Mammary epithelial cell (primary cell): ENCODE measurements at regions of chr2 and their contacts with region 1.

Region 1: DNA sequence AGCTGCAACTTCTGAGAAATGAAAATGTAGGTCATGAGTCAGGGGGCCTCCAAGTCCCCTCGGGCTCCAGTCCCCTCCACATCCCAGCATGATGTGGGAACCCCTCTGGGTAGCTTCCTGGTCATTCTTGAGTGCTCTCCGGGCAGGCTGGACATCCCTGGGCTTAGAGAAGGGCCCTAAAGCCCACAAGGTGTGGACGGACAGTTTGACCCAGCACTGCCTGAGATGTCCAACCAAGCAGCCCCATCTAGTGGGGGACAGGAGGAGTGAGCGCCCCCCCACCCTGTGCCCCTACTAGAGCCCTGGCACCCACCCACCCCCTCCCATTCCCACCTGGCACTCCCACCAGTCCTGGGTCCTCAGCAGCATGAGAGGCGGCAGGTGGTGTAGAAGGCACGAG is 46.0 kb downstream of the CYP27C1 start:
- DNase-seq: no peak
- H3K4me3 ChIP-seq: no peak overlapping the region
- H3K27ac ChIP-seq: no peak overlapping the region
- H3K4me1 ChIP-seq: no peaks in the 10 kb centered on the region
- H3K27me3 ChIP-seq: no peaks in the 10 kb centered on the region
- CTCF ChIP-seq: peak in 1 of 2 donors; percentile 9

Region 2: GRCh38 chr2:127007652-127008051 is 166.5 kb before region 1 on chr2:
- CTCF ChIA-PET with region 1: no interaction called
- dilution Hi-C with region 1: no loop called
- in situ Hi-C with region 1: no loop called
- intact Hi-C with region 1: no loop called
- DNase-seq: peak; percentile 66
- H3K4me3 ChIP-seq: no peak overlapping the region
- H3K27ac ChIP-seq: no peak overlapping the region
- H3K4me1 ChIP-seq: peaks cover 4% of the 10 kb centered on the region
- H3K27me3 ChIP-seq: no peaks in the 10 kb centered on the region
- CTCF ChIP-seq: no peak

Region 3: DNA sequence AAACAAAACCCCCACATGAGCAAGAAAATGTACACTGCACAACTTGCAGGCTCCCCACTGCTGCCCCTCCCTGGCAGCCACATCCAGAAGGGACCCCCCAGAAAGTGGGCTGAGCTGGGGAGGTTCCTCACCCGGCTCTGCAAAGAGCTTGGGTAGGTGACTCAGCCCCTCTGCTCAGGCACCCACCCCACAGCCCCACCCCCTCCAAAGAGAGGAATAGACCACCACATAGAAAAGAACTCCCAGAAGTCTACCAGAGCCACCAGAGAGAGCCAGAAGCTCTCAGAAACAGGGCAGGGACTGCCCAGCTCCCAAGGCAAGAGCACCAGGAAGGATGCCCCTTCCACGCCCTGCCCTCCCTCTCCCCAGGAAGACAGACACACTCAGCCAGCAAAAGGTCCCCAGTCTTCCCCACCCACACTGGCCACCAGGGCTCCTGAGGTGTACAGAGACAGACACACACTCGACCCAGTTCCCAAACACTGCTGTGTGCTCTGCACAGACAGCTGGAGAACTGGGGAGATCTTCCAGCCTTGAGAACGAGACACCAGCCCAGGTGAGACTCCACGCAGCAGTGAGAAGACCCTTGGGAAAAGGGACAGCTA is 95.4 kb before region 1 on chr2:
- CTCF ChIA-PET with region 1: no interaction called
- dilution Hi-C with region 1: loop called (anchors 5 kb)
- in situ Hi-C with region 1: no loop called
- intact Hi-C with region 1: no loop called
- DNase-seq: no peak
- H3K4me3 ChIP-seq: no peak overlapping the region
- H3K27ac ChIP-seq: no peak overlapping the region
- H3K4me1 ChIP-seq: peaks cover 2% of the 10 kb centered on the region
- H3K27me3 ChIP-seq: no peaks in the 10 kb centered on the region
- CTCF ChIP-seq: no peak

Region 4: GRCh38 chr2:127153691-127154158 is 20.4 kb before region 1 on chr2:
- CTCF ChIA-PET with region 1: no interaction called
- dilution Hi-C with region 1: no loop called
- in situ Hi-C with region 1: no loop called
- intact Hi-C with region 1: no loop called
- DNase-seq: peak; percentile 77
- H3K4me3 ChIP-seq: no peak overlapping the region
- H3K27ac ChIP-seq: no peak overlapping the region
- H3K4me1 ChIP-seq: peaks cover 13% of the 10 kb centered on the region
- H3K27me3 ChIP-seq: no peaks in the 10 kb centered on the region
- CTCF ChIP-seq: no peak

Region 5: DNA sequence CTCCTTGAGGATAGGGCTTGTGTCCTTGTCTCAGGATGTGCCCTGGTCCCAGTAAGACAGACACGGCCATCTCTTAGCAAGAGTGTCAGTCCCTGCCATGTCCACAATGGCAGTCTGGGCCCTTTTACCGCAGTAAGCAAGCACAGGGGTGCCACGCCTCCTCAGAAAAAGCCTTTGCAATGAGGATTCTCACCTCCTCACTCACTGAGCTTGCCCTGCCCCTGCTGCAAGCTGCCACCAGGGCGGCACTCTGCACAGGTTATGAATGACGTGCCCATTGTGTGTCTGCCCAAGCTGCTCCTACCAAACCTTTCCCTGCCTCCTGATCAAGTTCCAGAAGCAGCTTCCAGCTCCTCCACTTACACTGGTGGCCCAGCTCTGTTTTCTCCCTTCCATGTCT is 96.5 kb after region 1 on chr2:
- CTCF ChIA-PET with region 1: no interaction called
- dilution Hi-C with region 1: no loop called
- in situ Hi-C with region 1: no loop called
- intact Hi-C with region 1: no loop called
- DNase-seq: no peak
- H3K4me3 ChIP-seq: no peak overlapping the region
- H3K27ac ChIP-seq: no peak overlapping the region
- H3K4me1 ChIP-seq: no peaks in the 10 kb centered on the region
- H3K27me3 ChIP-seq: no peaks in the 10 kb centered on the region
- CTCF ChIP-seq: peak in 1 of 2 donors; percentile 23